Naive thymus-derived CD4-positive, alpha-beta T cell (primary cell): ENCODE measurements at regions of chrX and their contacts with region 1.

Region 1: DNA sequence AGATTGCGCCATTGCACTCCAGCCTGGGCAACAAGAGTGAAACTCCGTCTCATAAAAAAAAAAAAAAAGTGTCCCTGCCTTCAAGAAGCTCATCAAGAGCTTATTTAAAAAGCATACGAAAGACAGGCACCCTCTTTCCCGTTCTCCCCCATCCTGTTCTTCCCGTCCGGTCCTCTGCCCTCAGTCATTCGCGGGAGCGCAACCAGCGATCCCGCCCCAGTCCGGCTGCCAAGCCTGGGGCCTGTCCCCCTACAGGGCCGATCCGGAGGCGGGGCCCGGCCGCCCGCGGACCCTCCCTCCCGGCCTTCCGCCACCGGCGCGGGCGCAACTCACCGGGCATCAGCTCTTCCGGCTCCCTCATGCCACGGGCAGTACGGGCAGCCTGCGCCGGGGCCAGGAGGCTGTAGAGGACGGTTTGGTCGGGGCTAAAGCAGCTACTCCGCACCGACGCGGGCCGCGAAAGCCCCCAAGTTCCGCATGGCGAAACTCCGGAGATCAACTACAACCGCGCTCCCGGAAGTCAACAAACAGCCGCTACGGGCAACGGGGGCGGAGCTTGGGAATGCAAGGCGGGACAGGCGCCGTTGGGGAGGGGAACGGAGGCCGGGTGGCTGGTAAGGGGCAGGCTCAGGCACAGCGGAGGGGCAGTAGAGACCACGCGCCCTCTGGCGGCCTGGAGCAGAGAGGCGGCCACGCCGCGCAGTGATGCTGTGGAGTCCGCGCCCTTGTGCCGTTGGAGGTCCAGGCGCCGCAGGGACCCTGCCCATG is at the start of gene RPGR:
- DNase-seq: peak; percentile 80 to 91 (median 88)
- ATAC-seq: peak; percentile 99
- H3K4me3 ChIP-seq: peak within 1 kb of the TSS; percentile 67
- H3K4me3 Mint-ChIP-seq: peak within 1 kb of the TSS; percentile 88 to 96 (median 92)
- H3K27ac ChIP-seq: peak within 1 kb of the TSS; percentile 77
- H3K27ac Mint-ChIP-seq: peak within 1 kb of the TSS; percentile 80 to 98 (median 93)
- H3K4me1 ChIP-seq: peaks cover 0 to 12% of the 10 kb centered on the region in 2 donors
- H3K4me1 Mint-ChIP-seq: peaks cover 1 to 28% (median 26%) of the 10 kb centered on the region in 7 donors
- H3K27me3 ChIP-seq: no peaks in the 10 kb centered on the region
- H3K27me3 Mint-ChIP-seq: no peaks in the 10 kb centered on the region
- total RNA-seq, gene RPGR: 4.3 to 26.0 (median 10.9) TPM

Region 2: GRCh38 chrX:36950495-36951253 is 1376.5 kb before region 1 on chrX:
- CTCF ChIA-PET with region 1: no interaction called
- POLR2A ChIA-PET with region 1: no interaction called
- intact Hi-C with region 1: no loop called
- DNase-seq: no peak
- ATAC-seq: no peak
- H3K4me3 ChIP-seq: no peak overlapping the region
- H3K4me3 Mint-ChIP-seq: no peak overlapping the region
- H3K27ac ChIP-seq: no peak overlapping the region
- H3K27ac Mint-ChIP-seq: no peak overlapping the region
- H3K4me1 ChIP-seq: no peaks in the 10 kb centered on the region
- H3K4me1 Mint-ChIP-seq: no peaks in the 10 kb centered on the region
- H3K27me3 ChIP-seq: no peaks in the 10 kb centered on the region
- H3K27me3 Mint-ChIP-seq: peaks cover 0 to 6% (median 4%) of the 10 kb centered on the region in 5 donors

Region 3: GRCh38 chrX:37745354-37745753 is 581.8 kb before region 1 on chrX:
- CTCF ChIA-PET with region 1: no interaction called
- POLR2A ChIA-PET with region 1: no interaction called
- intact Hi-C with region 1: loop called in 1 of 2 experiments (anchors 1 kb)
- DNase-seq: peak; percentile 48 to 76 (median 64)
- ATAC-seq: peak; percentile 89
- H3K4me3 ChIP-seq: no peak overlapping the region
- H3K4me3 Mint-ChIP-seq: peak overlapping the region in 1 of 10 donors; percentile 9
- H3K27ac ChIP-seq: no peak overlapping the region
- H3K27ac Mint-ChIP-seq: peak overlapping the region in 2 of 9 donors; percentile 49 to 63
- H3K4me1 ChIP-seq: peaks cover 6 to 7% of the 10 kb centered on the region in 2 donors
- H3K4me1 Mint-ChIP-seq: peaks cover 8 to 21% (median 11%) of the 10 kb centered on the region in 7 donors
- H3K27me3 ChIP-seq: no peaks in the 10 kb centered on the region
- H3K27me3 Mint-ChIP-seq: peaks cover 0 to 18% (median 0%) of the 10 kb centered on the region in 5 donors

Region 4: GRCh38 chrX:37825209-37825842 is 501.9 kb before region 1 on chrX:
- CTCF ChIA-PET with region 1: no interaction called
- POLR2A ChIA-PET with region 1: no interaction called
- intact Hi-C with region 1: loop called in 1 of 2 experiments (anchors 5 kb)
- DNase-seq: peak; percentile 9 to 69 (median 49)
- ATAC-seq: peak; percentile 83
- H3K4me3 ChIP-seq: no peak overlapping the region
- H3K4me3 Mint-ChIP-seq: peak overlapping the region in 3 of 10 donors; percentile 6 to 14 (median 14)
- H3K27ac ChIP-seq: no peak overlapping the region
- H3K27ac Mint-ChIP-seq: no peak overlapping the region
- H3K4me1 ChIP-seq: peaks cover 9 to 10% of the 10 kb centered on the region in 2 donors
- H3K4me1 Mint-ChIP-seq: peaks cover 11 to 29% (median 20%) of the 10 kb centered on the region in 7 donors
- H3K27me3 ChIP-seq: no peaks in the 10 kb centered on the region
- H3K27me3 Mint-ChIP-seq: no peaks in the 10 kb centered on the region

Region 5: GRCh38 chrX:37926700-37927099 is 400.5 kb before region 1 on chrX:
- CTCF ChIA-PET with region 1: no interaction called
- POLR2A ChIA-PET with region 1: no interaction called
- intact Hi-C with region 1: loop called (anchors 1 kb)
- DNase-seq: peak in 4 of 9 donors; percentile 2 to 24 (median 8)
- ATAC-seq: peak; percentile 45
- H3K4me3 ChIP-seq: no peak overlapping the region
- H3K4me3 Mint-ChIP-seq: no peak overlapping the region
- H3K27ac ChIP-seq: no peak overlapping the region
- H3K27ac Mint-ChIP-seq: no peak overlapping the region
- H3K4me1 ChIP-seq: no peaks in the 10 kb centered on the region
- H3K4me1 Mint-ChIP-seq: peaks cover 0 to 3% (median 0%) of the 10 kb centered on the region in 7 donors
- H3K27me3 ChIP-seq: no peaks in the 10 kb centered on the region
- H3K27me3 Mint-ChIP-seq: peaks cover 0 to 12% (median 6%) of the 10 kb centered on the region in 5 donors

Region 6: GRCh38 chrX:38407126-38407525 is 79.9 kb after region 1 on chrX:
- CTCF ChIA-PET with region 1: no interaction called
- POLR2A ChIA-PET with region 1: no interaction called
- intact Hi-C with region 1: no loop called
- DNase-seq: no peak
- ATAC-seq: no peak
- H3K4me3 ChIP-seq: no peak overlapping the region
- H3K4me3 Mint-ChIP-seq: no peak overlapping the region
- H3K27ac ChIP-seq: no peak overlapping the region
- H3K27ac Mint-ChIP-seq: no peak overlapping the region
- H3K4me1 ChIP-seq: no peaks in the 10 kb centered on the region
- H3K4me1 Mint-ChIP-seq: no peaks in the 10 kb centered on the region
- H3K27me3 ChIP-seq: no peaks in the 10 kb centered on the region
- H3K27me3 Mint-ChIP-seq: peaks cover 2 to 14% (median 9%) of the 10 kb centered on the region in 5 donors

Region 7: GRCh38 chrX:38561126-38561868 is 234.1 kb after region 1 on chrX and contains the start of gene TSPAN7:
- CTCF ChIA-PET with region 1: no interaction called
- POLR2A ChIA-PET with region 1: no interaction called
- intact Hi-C with region 1: loop called (anchors 1 to 5 kb)
- DNase-seq: peak; percentile 69 to 84 (median 79)
- ATAC-seq: peak; percentile 95
- H3K4me3 ChIP-seq: peak within 1 kb of the TSS; percentile 61
- H3K4me3 Mint-ChIP-seq: peak within 1 kb of the TSS; percentile 80 to 91 (median 88)
- H3K27ac ChIP-seq: peak within 1 kb of the TSS; percentile 51
- H3K27ac Mint-ChIP-seq: peak within 1 kb of the TSS in 6 of 9 donors; percentile 21 to 80 (median 56)
- H3K4me1 ChIP-seq: peaks cover 0 to 7% of the 10 kb centered on the region in 2 donors
- H3K4me1 Mint-ChIP-seq: peaks cover 0 to 5% (median 3%) of the 10 kb centered on the region in 7 donors
- H3K27me3 ChIP-seq: no peaks in the 10 kb centered on the region
- H3K27me3 Mint-ChIP-seq: peaks cover 0 to 28% (median 0%) of the 10 kb centered on the region in 5 donors
- total RNA-seq, gene TSPAN7: 0.27 to 0.48 (median 0.41) TPM in 3 of 5 experiments, not detected in the others